AG04449 (cell line): ENCODE measurements at regions of chr7 and their contacts with region 1.

Region 1: GRCh38 chr7:87152107-87152844 is at the start of gene DMTF1:
- DNase-seq: peak; percentile 59
- H3K4me3 ChIP-seq: peak within 1 kb of the TSS; percentile 80
- CTCF ChIP-seq: no peak

Region 2: GRCh38 chr7:86914551-86914950 is 237.7 kb before region 1 on chr7:
- CTCF ChIA-PET with region 1: interaction called, 20 read pairs
- POLR2A ChIA-PET with region 1: no interaction called
- DNase-seq: no peak
- H3K4me3 ChIP-seq: no peak overlapping the region
- CTCF ChIP-seq: peak; percentile 12

Region 3: GRCh38 chr7:86939197-86939814 is 213.0 kb before region 1 on chr7:
- CTCF ChIA-PET with region 1: interaction called, 28 read pairs
- POLR2A ChIA-PET with region 1: no interaction called
- DNase-seq: no peak
- H3K4me3 ChIP-seq: no peak overlapping the region
- CTCF ChIP-seq: peak; percentile 60

Region 4: DNA sequence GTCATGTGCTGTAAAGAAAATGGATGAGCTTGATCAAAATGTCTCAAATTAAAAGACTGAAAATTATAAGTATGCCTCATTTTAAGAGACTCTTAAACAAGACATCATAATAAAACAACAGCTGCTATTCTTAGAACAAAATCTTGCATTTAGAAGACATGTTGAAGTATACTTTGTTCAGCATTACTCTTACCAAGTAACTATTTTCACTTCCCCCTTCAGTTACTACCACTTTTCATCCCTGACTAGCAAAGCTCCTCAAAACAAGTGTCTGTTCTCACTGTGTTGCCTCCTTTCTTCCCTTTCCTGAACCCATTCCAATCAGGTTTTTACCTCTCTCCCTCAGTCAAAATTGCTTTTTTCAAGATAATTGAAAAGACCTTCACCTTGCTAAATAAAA is 124.4 kb before region 1 on chr7:
- CTCF ChIA-PET with region 1: no interaction called
- POLR2A ChIA-PET with region 1: no interaction called
- DNase-seq: no peak
- H3K4me3 ChIP-seq: no peak overlapping the region
- CTCF ChIP-seq: no peak

Region 5: DNA sequence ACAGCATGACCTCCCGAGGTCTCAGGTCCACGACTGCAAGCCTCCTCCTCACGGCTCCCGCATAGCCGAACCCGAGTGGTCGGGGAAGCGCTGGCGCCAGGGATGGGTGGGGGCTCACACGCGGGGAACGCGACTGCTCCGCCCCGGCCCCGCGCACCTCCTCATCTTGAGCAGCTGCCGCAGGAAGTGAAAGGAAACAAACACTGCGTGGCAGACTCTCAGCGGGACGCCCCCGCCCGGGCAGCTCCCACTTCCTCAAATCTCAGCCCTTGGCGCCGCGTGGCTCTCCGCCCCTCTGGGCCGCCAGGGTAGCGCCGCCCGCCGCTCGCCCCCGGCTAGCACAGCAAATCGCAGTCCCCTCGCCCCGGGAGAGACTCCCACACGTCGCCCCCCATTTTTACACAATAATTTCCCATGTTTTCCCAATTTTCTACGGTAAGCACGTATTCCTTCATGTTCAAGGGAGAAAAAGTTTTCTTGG is 67.3 kb after region 1 on chr7 and contains the start of gene TMEM243:
- CTCF ChIA-PET with region 1: interaction called, 3 read pairs
- POLR2A ChIA-PET with region 1: interaction called, 21 read pairs
- DNase-seq: no peak
- H3K4me3 ChIP-seq: peak within 1 kb of the TSS; percentile 93
- CTCF ChIP-seq: peak; percentile 32